ENCODE measurements at regions of chr15 and their contacts with region 1.

Region 1: GRCh38 chr15:42650208-42651066 is 75.0 kb downstream of the STARD9 start:
- DNase-seq: peak; percentile 19 to 69 (median 59)
- ATAC-seq: peak; percentile 85
- H3K4me3 ChIP-seq: no peak overlapping the region
- H3K4me3 Mint-ChIP-seq: no peak overlapping the region
- H3K27ac ChIP-seq: no peak overlapping the region
- H3K27ac Mint-ChIP-seq: no peak overlapping the region
- H3K4me1 ChIP-seq: no peaks in the 10 kb centered on the region
- H3K4me1 Mint-ChIP-seq: peaks cover 0 to 22% (median 4%) of the 10 kb centered on the region in 7 donors
- H3K27me3 ChIP-seq: no peaks in the 10 kb centered on the region
- H3K27me3 Mint-ChIP-seq: no peaks in the 10 kb centered on the region

Region 2: GRCh38 chr15:42474827-42475226 is 175.6 kb before region 1 on chr15:
- CTCF ChIA-PET with region 1: no interaction called
- POLR2A ChIA-PET with region 1: no interaction called
- intact Hi-C with region 1: loop called in 1 of 2 experiments (anchors 1 kb)
- DNase-seq: no peak
- ATAC-seq: no peak
- H3K4me3 ChIP-seq: no peak overlapping the region
- H3K4me3 Mint-ChIP-seq: no peak overlapping the region
- H3K27ac ChIP-seq: no peak overlapping the region
- H3K27ac Mint-ChIP-seq: peak overlapping the region in 7 of 9 donors; percentile 13 to 76 (median 54)
- H3K4me1 ChIP-seq: no peaks in the 10 kb centered on the region
- H3K4me1 Mint-ChIP-seq: peaks cover 8 to 44% (median 16%) of the 10 kb centered on the region in 7 donors
- H3K27me3 ChIP-seq: no peaks in the 10 kb centered on the region
- H3K27me3 Mint-ChIP-seq: no peaks in the 10 kb centered on the region

Region 3: DNA sequence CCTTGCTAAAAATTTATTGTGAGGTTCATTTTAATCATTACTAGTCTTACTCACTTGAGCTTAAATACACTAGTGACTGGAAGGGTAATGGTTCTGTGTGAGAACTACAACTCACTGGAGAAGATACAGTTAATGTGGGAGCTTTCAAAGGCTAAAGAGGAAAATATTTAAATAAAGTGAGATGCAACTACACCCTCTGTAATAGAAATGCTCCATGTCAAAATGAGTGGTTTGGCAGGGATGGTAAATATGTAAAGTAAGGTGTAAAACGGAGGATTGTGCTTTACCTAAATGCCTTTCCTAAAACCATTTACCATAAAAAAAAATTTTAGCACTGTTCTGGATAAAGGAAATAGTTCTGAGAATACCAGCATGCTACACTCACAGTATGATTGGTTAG is 117.2 kb before region 1 on chr15:
- CTCF ChIA-PET with region 1: no interaction called
- POLR2A ChIA-PET with region 1: no interaction called
- intact Hi-C with region 1: loop called in 1 of 2 experiments (anchors 2 kb)
- DNase-seq: no peak
- ATAC-seq: no peak
- H3K4me3 ChIP-seq: no peak overlapping the region
- H3K4me3 Mint-ChIP-seq: no peak overlapping the region
- H3K27ac ChIP-seq: no peak overlapping the region
- H3K27ac Mint-ChIP-seq: no peak overlapping the region
- H3K4me1 ChIP-seq: no peaks in the 10 kb centered on the region
- H3K4me1 Mint-ChIP-seq: peaks cover 0 to 3% (median 0%) of the 10 kb centered on the region in 7 donors
- H3K27me3 ChIP-seq: no peaks in the 10 kb centered on the region
- H3K27me3 Mint-ChIP-seq: no peaks in the 10 kb centered on the region

Region 4: DNA sequence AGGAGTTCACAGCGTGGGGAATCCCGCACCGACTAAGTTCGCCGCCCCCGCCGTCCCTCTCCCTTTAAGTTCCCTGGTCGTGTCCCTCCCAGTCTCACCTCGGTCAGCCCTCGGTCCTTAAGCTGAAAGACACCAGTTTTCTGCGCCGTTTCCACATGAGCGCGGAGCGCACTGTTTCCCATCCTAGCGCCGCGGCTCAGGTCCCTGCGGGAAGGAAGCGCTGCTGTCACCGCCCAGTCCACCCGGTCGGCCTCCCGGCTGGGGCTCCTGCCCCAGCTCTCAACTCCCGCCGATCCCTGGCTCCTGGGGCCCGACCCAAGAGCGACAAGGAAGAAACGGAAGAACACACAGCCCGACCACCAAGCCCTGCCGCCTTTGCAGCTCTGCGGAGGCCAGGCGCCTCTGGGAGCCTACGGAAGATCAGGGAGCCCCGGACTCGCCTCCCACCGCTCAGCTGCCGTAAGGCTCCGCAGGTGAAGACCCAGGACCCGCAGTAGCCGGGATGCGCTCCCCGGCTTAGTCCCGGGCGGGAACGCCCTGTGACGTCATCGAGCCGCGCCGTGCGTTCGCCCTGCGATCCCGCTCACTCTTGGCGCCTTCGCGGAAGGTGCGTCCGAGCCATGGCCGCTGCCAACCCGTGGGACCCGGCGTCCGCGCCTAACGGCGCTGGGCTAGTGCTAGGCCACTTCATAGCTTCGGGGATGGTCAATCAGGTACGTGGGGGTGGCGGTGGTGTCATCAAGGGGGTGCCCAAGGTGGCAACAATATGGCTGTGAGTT is 102.0 kb before region 1 on chr15 and contains the starts of genes HAUS2 and LRRC57:
- CTCF ChIA-PET with region 1: interaction called, 3 read pairs
- POLR2A ChIA-PET with region 1: no interaction called
- intact Hi-C with region 1: loop called (anchors 1 kb)
- DNase-seq: peak; percentile 79 to 93 (median 86)
- ATAC-seq: peak; percentile 89
- H3K4me3 ChIP-seq: peak within 1 kb of the TSS; percentile 86
- H3K4me3 Mint-ChIP-seq: peak within 1 kb of the TSS; percentile 93 to 99 (median 96)
- H3K27ac ChIP-seq: peak within 1 kb of the TSS; percentile 93
- H3K27ac Mint-ChIP-seq: peak within 1 kb of the TSS; percentile 95 to 99 (median 97)
- H3K4me1 ChIP-seq: peaks cover 21 to 23% of the 10 kb centered on the region in 2 donors
- H3K4me1 Mint-ChIP-seq: peaks cover 29 to 62% (median 51%) of the 10 kb centered on the region in 7 donors
- H3K27me3 ChIP-seq: no peaks in the 10 kb centered on the region
- H3K27me3 Mint-ChIP-seq: no peaks in the 10 kb centered on the region
- total RNA-seq, gene HAUS2: 12.0 to 35.4 (median 16.8) TPM
- total RNA-seq, gene LRRC57: 15.4 to 37.1 (median 18.0) TPM

Region 5: DNA sequence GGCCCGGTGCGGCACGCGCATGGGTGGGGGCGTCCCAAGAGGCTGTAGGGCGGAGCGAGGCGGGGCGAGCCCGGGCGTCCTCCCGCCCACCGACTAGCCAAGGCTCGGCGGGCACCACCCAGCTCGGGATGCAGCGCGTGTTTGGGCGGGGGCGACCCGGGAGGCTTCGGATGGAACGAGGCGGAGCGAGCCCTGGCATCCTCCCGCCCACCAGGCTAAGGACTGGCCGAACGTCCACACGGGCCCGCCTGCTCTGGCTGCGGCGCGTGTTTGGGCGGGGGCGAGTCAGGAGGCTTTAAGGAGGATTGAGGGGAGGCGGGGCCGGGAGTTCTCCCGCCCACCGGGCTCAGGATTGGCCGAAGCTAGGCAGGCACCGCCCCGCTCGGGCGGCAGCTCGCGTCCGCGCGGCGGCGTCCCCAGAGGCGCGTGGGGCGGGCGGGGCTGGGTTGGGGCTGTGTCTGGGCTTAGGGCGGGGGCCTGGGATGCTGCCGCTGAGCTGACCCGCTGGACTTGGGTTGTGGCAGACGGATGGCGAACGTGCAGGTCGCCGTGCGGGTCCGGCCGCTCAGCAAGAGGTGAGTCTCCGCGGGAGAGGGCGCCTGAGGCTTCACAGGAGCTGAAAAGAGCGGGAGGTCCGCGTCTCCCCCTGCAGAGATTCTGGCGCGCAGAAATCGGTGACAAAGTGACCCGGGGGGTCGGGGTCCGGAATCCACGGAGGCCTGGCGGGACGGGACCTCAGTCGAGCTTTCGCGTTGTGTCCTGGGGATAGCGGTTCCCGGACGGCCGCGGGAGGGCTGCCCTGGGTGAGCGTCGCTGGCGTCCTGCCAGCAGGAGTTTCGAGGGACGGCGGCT is 75.0 kb before region 1 on chr15 and contains the start of gene STARD9:
- CTCF ChIA-PET with region 1: no interaction called
- POLR2A ChIA-PET with region 1: no interaction called
- intact Hi-C with region 1: loop called (anchors 1 kb)
- DNase-seq: peak; percentile 84 to 96 (median 93)
- ATAC-seq: peak; percentile 96
- H3K4me3 ChIP-seq: peak within 1 kb of the TSS; percentile 81
- H3K4me3 Mint-ChIP-seq: peak within 1 kb of the TSS; percentile 74 to 95 (median 92)
- H3K27ac ChIP-seq: peak within 1 kb of the TSS; percentile 58
- H3K27ac Mint-ChIP-seq: peak within 1 kb of the TSS; percentile 10 to 84 (median 76)
- H3K4me1 ChIP-seq: peaks cover 7 to 12% of the 10 kb centered on the region in 2 donors
- H3K4me1 Mint-ChIP-seq: peaks cover 14 to 36% (median 19%) of the 10 kb centered on the region in 7 donors
- H3K27me3 ChIP-seq: no peaks in the 10 kb centered on the region
- H3K27me3 Mint-ChIP-seq: peaks cover 6 to 35% (median 13%) of the 10 kb centered on the region in 5 donors
- total RNA-seq, gene STARD9: 2.4 to 10.5 (median 4.5) TPM

Region 6: DNA sequence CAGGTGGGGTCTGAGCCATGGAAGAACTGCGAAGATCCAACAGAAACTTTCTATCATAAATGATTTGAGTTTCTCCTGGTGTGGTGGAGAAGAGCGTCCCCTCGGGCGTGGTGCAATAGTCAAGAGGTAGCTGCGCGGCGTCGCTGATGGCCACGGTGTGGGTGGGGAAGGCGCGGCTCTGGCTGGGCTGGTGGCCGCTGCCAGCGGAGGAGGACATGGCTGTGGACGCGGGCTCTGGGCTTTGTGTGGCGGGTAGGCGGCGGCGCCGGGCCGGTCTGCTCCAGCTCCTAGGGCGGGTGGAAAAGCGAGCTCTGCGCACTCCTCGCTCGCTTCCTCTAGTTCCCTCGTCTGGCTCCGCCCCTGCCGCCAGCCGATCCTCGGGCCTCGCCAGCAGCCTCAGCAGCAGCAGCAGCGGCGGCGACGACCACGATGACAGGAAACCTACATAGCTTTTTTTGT is 69.1 kb before region 1 on chr15:
- CTCF ChIA-PET with region 1: interaction called, 6 read pairs
- POLR2A ChIA-PET with region 1: no interaction called
- intact Hi-C with region 1: loop called in 1 of 2 experiments (anchors 1 kb)
- DNase-seq: peak; percentile 63 to 80 (median 77)
- ATAC-seq: peak; percentile 98
- H3K4me3 ChIP-seq: peak overlapping the region; percentile 33
- H3K4me3 Mint-ChIP-seq: peak overlapping the region; percentile 85 to 96 (median 90)
- H3K27ac ChIP-seq: peak overlapping the region; percentile 71
- H3K27ac Mint-ChIP-seq: peak overlapping the region; percentile 77 to 97 (median 89)
- H3K4me1 ChIP-seq: peaks cover 8 to 11% of the 10 kb centered on the region in 2 donors
- H3K4me1 Mint-ChIP-seq: peaks cover 20 to 51% (median 37%) of the 10 kb centered on the region in 7 donors
- H3K27me3 ChIP-seq: no peaks in the 10 kb centered on the region
- H3K27me3 Mint-ChIP-seq: peaks cover 4 to 32% (median 10%) of the 10 kb centered on the region in 5 donors

Region 7: DNA sequence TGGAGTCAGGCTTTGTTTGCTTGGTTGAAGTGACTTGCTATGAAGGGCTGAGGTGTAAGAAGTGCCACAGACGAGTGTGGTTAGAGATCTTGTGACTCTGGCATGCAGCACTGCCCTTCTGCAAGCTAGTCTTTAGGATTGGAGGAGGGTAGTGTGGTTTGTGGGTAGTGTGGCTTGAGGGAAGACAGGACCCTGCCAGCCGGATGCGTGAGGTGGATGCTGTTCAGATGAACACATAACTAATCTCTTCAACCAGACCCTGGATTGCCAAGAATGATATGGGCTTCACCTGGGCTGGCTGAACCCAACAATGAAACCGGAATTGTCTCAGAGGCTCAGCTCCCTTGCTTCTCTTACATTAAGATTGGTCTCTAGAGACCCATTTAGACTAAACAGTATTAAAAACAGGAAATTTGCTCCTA is 42.3 kb before region 1 on chr15:
- CTCF ChIA-PET with region 1: no interaction called
- POLR2A ChIA-PET with region 1: interaction called, 3 read pairs
- intact Hi-C with region 1: loop called in 1 of 2 experiments (anchors 2 kb)
- DNase-seq: peak in 5 of 9 donors; percentile 7 to 51 (median 9)
- ATAC-seq: peak; percentile 85
- H3K4me3 ChIP-seq: no peak overlapping the region
- H3K4me3 Mint-ChIP-seq: peak overlapping the region; percentile 35 to 85 (median 71)
- H3K27ac ChIP-seq: no peak overlapping the region
- H3K27ac Mint-ChIP-seq: peak overlapping the region; percentile 11 to 83 (median 64)
- H3K4me1 ChIP-seq: peaks cover 14 to 38% of the 10 kb centered on the region in 2 donors
- H3K4me1 Mint-ChIP-seq: peaks cover 38 to 62% (median 48%) of the 10 kb centered on the region in 7 donors
- H3K27me3 ChIP-seq: no peaks in the 10 kb centered on the region
- H3K27me3 Mint-ChIP-seq: no peaks in the 10 kb centered on the region

Measured in naive thymus-derived CD4-positive, alpha-beta T cell (primary cell).